ENCODE measurements at regions of chr10 and their contacts with region 1.

Region 1: GRCh38 chr10:103800789-103801540 is 54.4 kb downstream of the SH3PXD2A start:
- DNase-seq: peak; percentile 82
- ATAC-seq: peak; percentile 92
- H3K4me3 ChIP-seq: no peak overlapping the region
- H3K27ac ChIP-seq: peak overlapping the region; percentile 5; the same call in 1 of the 2 replicates
- H3K4me1 ChIP-seq: peaks cover 16% of the 10 kb centered on the region
- H3K27me3 ChIP-seq: no peaks in the 10 kb centered on the region
- CTCF ChIP-seq: no peak
- POLR2A ChIP-seq: no peak
- RAD21 ChIP-seq: no peak

Region 2: DNA sequence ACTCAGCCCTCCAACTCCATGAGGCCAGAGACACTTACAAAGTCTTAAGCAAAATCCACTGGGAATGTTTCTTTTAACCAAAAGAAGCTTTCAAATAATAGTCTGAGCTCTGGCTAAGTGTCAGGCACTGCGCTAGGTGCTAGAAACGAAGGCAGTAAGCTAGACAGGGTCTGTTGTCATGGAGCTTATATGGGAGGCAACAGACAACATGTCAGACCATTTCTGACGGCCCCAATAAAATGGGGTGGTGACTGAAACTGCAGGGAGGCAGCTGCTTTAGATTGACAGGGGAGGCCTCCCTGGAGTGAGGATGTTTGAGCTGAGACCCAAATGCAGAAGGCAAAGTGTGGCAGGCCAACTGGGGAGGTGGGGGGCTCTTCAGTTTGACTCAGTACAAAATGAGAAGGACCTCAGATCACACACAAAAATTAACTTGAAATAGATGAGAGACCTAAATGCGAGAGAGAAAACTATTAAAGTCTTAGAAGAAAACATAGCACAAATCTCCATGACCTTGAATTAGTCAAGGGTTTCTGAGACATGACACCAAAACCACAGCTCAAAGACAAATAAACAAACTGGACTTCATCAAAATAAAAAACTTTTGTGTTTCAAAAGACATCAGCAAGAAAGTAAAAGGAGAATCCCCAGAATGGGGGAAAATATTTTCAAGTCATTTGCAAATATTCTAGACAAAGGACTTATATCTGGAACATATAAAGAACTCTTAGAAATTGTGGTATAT is 13.8 kb after region 1 on chr10:
- CTCF ChIA-PET with region 1: no interaction called
- POLR2A ChIA-PET with region 1: interaction called, 3 read pairs
- dilution Hi-C with region 1: no loop called
- in situ Hi-C with region 1: no loop called
- intact Hi-C with region 1: loop called (anchors 2 kb)
- DNase-seq: peak; percentile 61
- ATAC-seq: peak; percentile 21; the same call in 1 of the 2 replicates
- H3K4me3 ChIP-seq: no peak overlapping the region
- H3K27ac ChIP-seq: no peak overlapping the region
- H3K4me1 ChIP-seq: peaks cover 4% of the 10 kb centered on the region
- H3K27me3 ChIP-seq: peaks cover under 1% of the 10 kb centered on the region; the same call in 1 of the 2 replicates
- CTCF ChIP-seq: no peak
- POLR2A ChIP-seq: no peak
- RAD21 ChIP-seq: no peak

Region 3: GRCh38 chr10:103835096-103836050 is 34.4 kb after region 1 on chr10:
- CTCF ChIA-PET with region 1: no interaction called
- POLR2A ChIA-PET with region 1: no interaction called
- dilution Hi-C with region 1: no loop called
- in situ Hi-C with region 1: no loop called
- intact Hi-C with region 1: no loop called
- DNase-seq: peak; percentile 87
- ATAC-seq: peak; percentile 54
- H3K4me3 ChIP-seq: no peak overlapping the region
- H3K27ac ChIP-seq: no peak overlapping the region
- H3K4me1 ChIP-seq: peaks cover 10% of the 10 kb centered on the region
- H3K27me3 ChIP-seq: no peaks in the 10 kb centered on the region
- CTCF ChIP-seq: no peak
- POLR2A ChIP-seq: no peak
- RAD21 ChIP-seq: no peak

Region 4: DNA sequence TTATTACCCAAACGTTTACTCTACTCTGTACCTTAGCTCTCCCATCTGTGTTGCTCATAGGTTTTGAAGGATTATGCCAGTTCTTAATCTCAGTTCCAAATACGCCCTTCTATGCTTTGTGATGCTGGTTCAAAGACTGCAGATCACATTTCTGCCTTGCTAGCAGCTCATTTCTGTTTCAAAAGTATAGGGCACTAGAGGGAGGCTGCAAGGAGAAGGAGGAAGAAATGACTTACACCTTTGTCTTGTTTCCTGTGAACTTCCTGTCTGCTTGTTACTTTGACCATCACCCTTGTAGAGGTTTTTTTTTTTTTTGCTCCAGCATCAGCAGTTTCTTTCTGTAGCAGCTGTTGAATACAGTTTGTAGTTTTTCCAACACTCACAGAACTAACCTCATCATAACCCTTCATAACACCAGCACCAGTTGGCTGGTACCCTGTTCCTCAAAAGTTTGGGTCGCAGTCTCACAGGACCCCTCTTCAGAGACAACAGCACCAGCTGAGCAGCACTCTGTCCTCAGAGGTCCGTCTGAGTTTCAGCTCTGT is 182.5 kb after region 1 on chr10:
- CTCF ChIA-PET with region 1: no interaction called
- POLR2A ChIA-PET with region 1: no interaction called
- dilution Hi-C with region 1: no loop called
- in situ Hi-C with region 1: no loop called
- intact Hi-C with region 1: no loop called
- DNase-seq: no peak
- ATAC-seq: no peak
- H3K4me3 ChIP-seq: no peak overlapping the region
- H3K27ac ChIP-seq: no peak overlapping the region
- H3K4me1 ChIP-seq: peaks cover 12% of the 10 kb centered on the region
- H3K27me3 ChIP-seq: no peaks in the 10 kb centered on the region
- CTCF ChIP-seq: no peak
- POLR2A ChIP-seq: no peak
- RAD21 ChIP-seq: no peak

Measured in IMR-90 (cell line).